OCI-LY7 (cell line): ENCODE measurements at regions of chr7 and their contacts with region 1.

Region 1: GRCh38 chr7:128209229-128210035 is 31.6 kb upstream of the LEP start:
- DNase-seq: peak; percentile 80
- H3K4me3 ChIP-seq: no peak overlapping the region
- H3K27ac ChIP-seq: no peak overlapping the region
- H3K4me1 ChIP-seq: no peaks in the 10 kb centered on the region
- CTCF ChIP-seq: peak; percentile 98

Region 2: GRCh38 chr7:127447326-127447945 is 762.0 kb before region 1 on chr7:
- CTCF ChIA-PET with region 1: no interaction called
- POLR2A ChIA-PET with region 1: no interaction called
- intact Hi-C with region 1: loop called (anchors 10 kb)
- DNase-seq: peak; percentile 82
- H3K4me3 ChIP-seq: no peak overlapping the region
- H3K27ac ChIP-seq: no peak overlapping the region
- H3K4me1 ChIP-seq: no peaks in the 10 kb centered on the region
- CTCF ChIP-seq: peak; percentile 93

Region 3: DNA sequence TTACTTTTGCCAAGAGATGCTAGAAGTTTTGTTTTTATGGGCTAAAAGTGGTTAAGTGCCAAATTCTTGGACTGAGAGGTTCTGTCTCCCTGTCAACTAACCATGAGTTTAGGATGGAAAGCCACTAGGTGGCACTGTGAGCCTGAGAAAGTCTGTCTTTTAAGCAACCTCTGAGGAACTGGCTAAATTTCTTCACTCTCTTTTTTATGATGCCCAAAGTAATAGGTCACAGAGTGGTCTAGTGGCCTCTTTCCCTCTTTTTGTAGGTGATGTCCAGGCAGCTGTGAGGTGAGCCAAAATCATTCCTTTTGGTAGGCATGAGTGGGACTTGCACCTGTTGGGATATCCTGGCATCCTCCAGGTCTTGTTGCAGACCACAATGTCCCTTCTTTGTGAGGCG is 500.6 kb before region 1 on chr7:
- CTCF ChIA-PET with region 1: interaction called, 11 read pairs
- POLR2A ChIA-PET with region 1: no interaction called
- intact Hi-C with region 1: loop called (anchors 1 kb)
- DNase-seq: peak; percentile 80
- H3K4me3 ChIP-seq: no peak overlapping the region
- H3K27ac ChIP-seq: no peak overlapping the region
- H3K4me1 ChIP-seq: no peaks in the 10 kb centered on the region
- CTCF ChIP-seq: peak; percentile 89

Region 4: DNA sequence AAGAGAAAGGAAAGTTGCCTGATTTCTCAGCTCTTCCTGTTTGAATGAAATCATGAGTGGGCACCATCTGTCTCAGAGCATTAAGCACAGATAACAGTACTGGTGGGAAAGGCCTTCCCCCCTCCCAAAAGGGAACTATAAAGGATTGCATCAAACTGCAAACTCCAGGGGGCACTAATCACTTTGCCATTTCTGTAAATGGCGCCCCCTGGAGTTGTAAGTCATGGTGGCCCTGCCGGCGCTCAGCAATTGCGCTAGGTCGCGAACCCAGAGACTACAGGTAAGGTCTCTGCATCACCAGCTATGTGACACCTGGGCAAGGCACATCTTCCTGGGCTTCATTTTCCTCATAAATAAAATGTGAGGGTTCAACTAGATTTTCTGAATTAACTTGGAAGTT is 189.3 kb before region 1 on chr7:
- CTCF ChIA-PET with region 1: no interaction called
- POLR2A ChIA-PET with region 1: no interaction called
- intact Hi-C with region 1: loop called (anchors 5 kb)
- DNase-seq: peak; percentile 24
- H3K4me3 ChIP-seq: no peak overlapping the region
- H3K27ac ChIP-seq: no peak overlapping the region
- H3K4me1 ChIP-seq: no peaks in the 10 kb centered on the region
- CTCF ChIP-seq: peak; percentile 75

Region 5: DNA sequence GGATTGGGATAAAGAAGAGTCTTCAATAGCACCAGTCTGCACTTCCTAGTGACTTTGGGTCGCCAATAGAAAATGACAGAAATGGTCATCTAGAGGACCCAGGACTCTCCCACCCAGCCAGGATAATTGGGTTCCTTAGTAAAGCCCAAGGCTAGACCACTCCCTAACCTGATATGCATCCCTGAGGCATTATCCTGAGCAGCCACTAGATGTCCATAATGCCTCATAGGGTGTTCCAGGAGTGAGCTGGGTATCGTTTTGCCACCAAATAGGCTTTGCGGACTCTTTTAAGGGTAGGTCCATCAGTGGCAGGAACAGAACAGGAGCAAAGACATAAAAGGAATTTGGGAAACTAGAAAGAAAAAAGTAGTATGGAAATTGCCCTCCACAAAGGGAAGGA is 173.7 kb before region 1 on chr7:
- CTCF ChIA-PET with region 1: interaction called, 3 read pairs
- POLR2A ChIA-PET with region 1: no interaction called
- intact Hi-C with region 1: loop called (anchors 2 kb)
- DNase-seq: peak; percentile 18
- H3K4me3 ChIP-seq: no peak overlapping the region
- H3K27ac ChIP-seq: no peak overlapping the region
- H3K4me1 ChIP-seq: no peaks in the 10 kb centered on the region
- CTCF ChIP-seq: peak; percentile 69

Region 6: DNA sequence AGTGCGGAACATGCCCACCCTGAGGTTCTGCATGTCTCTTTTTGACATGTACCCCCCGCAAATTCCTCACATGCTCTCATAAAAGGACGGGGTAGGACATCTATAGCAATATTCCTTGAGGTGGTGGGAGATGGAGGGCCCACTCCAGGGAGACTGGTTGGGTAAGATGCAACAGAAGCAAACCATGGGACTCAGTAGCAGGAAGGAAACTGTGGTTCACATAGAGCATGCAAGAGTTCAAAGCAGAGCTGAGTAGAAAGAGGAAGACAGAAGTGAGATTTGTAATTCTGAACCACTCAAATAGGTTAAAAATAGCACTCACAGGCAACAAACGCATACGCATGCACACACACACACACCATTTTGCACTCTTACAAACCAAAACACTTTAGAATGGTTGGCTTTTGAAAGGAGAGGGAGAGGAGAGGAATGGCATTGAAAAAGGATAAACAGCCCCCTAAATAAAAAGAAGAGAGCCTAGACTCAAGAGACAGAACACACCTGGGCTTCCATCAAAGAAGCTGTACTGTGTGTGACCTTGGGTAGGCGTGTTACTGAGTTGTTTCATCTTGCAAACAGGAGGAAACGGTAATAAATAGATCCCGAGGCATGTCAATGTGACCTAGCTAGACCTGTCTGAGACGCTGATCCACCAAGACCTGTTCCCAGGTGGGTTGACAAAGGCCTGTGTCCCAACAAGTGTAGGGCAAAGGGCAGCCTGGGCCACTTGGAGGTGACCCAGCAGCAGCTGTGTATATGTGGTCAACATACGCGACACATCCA is 100.6 kb before region 1 on chr7:
- CTCF ChIA-PET with region 1: interaction called, 3 read pairs
- POLR2A ChIA-PET with region 1: interaction called, 3 read pairs
- intact Hi-C with region 1: loop called (anchors 1 kb)
- DNase-seq: peak; percentile 93
- H3K4me3 ChIP-seq: peak overlapping the region; percentile 51
- H3K27ac ChIP-seq: peak overlapping the region; percentile 95
- H3K4me1 ChIP-seq: peaks cover 86% of the 10 kb centered on the region
- CTCF ChIP-seq: no peak

Region 7: GRCh38 chr7:128135515-128136214 is 73.8 kb before region 1 on chr7:
- CTCF ChIA-PET with region 1: interaction called, 9 read pairs
- POLR2A ChIA-PET with region 1: interaction called, 6 read pairs
- intact Hi-C with region 1: loop called (anchors 1 kb)
- DNase-seq: peak; percentile 71
- H3K4me3 ChIP-seq: peak overlapping the region; percentile 68
- H3K27ac ChIP-seq: no peak overlapping the region
- H3K4me1 ChIP-seq: peaks cover 11% of the 10 kb centered on the region
- CTCF ChIP-seq: peak; percentile 85